ENCODE measurements at regions of chr11 and their contacts with region 1.

Region 1: DNA sequence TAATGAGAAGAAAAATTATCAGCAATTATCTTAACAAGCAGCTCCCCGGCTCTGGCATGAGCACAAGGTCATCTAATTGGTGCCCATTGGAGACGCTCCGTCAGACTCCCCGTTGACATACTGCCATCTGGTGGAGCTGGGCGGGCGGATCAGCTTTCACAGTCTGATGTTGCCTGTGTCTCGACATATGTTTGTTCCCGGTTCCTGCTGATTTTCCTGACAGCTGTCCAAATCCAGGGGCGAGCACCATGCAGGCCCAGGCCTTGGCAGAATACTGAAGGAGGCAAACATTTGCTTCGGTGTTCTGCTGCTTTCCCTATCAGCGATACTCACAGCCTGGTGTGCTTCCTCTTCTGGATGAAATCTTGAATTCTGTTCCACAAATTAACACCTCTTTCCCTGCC is 43.8 kb upstream of the BARX2 start:
- DNase-seq: peak; percentile 12
- H3K4me3 ChIP-seq: no peak overlapping the region
- CTCF ChIP-seq: peak; percentile 90

Region 2: GRCh38 chr11:129117595-129118350 is 214.1 kb before region 1 on chr11:
- CTCF ChIA-PET with region 1: interaction called, 136 read pairs
- POLR2A ChIA-PET with region 1: no interaction called
- DNase-seq: peak; percentile 26
- H3K4me3 ChIP-seq: no peak overlapping the region
- CTCF ChIP-seq: peak; percentile 66

Region 3: DNA sequence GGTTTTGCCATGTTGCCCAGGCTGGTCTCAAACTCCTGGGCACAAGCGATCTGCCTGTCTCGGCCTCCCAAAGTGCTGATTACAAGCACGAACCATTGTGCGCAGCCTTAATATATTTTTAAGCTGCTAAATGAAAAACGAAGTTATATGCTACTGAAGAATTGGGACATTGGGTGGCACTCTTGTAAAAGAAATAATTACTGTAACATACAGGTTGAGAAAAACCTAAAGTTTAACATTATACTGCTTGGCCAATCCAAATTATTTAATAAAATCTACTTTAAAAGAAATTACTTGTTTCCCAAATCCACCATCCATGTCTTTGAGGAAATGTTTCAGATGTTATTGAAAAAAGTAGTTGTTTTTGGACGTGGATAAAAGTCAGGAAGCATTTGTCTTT is 101.9 kb before region 1 on chr11:
- CTCF ChIA-PET with region 1: interaction called, 36 read pairs
- POLR2A ChIA-PET with region 1: no interaction called
- DNase-seq: no peak
- H3K4me3 ChIP-seq: no peak overlapping the region
- CTCF ChIP-seq: no peak

Region 4: GRCh38 chr11:129286813-129287212 is 45.1 kb before region 1 on chr11:
- CTCF ChIA-PET with region 1: no interaction called
- POLR2A ChIA-PET with region 1: no interaction called
- DNase-seq: no peak
- H3K4me3 ChIP-seq: no peak overlapping the region
- CTCF ChIP-seq: no peak

Region 5: GRCh38 chr11:129315781-129316481 is 15.9 kb before region 1 on chr11:
- CTCF ChIA-PET with region 1: interaction called, 30 read pairs
- POLR2A ChIA-PET with region 1: no interaction called
- DNase-seq: no peak
- H3K4me3 ChIP-seq: no peak overlapping the region
- CTCF ChIP-seq: no peak